ENCODE measurements at regions of chr7 and their contacts with region 1.

Region 1: DNA sequence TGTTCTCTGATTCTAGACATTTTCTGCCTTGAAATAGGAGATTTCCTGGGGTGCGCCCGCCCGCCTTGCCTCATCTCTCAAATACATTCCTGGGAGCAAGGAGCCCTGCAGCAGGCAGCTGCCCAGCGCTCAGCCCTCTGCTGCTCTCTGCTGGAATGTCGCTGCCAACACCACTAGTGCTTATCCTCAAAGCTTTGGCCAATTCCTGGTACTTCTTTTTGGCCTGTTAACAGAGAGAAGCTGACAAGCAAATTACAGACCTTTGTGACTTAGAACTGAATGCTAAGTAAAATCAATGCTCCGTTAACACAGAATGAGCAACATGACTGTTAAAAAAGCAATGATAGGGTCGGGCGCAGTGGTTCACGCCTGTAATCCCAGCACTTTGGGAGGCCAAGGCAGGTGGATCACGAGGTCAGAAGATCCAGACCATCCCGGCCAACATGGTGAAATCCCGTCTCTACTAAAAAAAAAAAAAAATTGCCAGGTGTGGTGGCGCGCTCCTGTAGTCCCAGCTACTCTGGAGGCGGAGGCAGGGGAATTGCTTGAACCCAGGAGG is 41.9 kb upstream of the SYPL1 start:
- DNase-seq: peak; percentile 89
- ATAC-seq: peak; percentile 98

Region 2: DNA sequence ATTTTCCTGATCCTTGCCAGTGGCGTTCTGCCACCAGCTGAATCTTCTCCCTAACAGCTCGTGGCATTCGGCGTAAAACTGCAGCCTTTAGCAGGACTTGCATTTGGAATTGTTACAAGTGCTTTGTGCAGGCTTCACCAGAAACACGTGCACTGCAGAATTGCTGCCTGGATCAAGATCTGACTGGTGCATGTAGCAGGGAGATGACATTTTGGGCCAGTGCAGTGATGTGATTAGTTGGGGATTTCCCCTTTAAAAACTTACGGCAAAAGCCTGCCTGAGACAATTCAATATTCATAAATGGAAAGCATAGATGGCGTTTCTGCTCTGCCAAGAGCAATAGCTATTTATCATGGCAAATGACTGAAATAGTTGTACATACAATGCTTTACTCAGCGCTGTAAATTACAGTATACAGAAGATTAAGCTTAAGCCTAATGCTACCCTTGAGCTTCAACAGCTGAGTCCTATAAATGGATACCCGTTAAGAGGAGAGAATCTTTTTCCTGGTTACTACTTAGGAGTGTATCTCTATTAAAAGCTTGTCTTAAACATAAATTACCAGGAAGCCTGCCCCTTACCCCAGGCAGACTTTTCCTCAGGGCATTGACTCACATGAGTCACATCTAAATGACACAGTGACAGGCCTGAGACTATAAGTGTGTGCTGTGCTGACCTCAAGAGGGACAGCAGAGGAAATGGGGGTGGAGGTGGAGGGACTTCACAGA is 383.9 kb before region 1 on chr7:
- intact Hi-C with region 1: no loop called
- DNase-seq: no peak
- ATAC-seq: no peak

Region 3: DNA sequence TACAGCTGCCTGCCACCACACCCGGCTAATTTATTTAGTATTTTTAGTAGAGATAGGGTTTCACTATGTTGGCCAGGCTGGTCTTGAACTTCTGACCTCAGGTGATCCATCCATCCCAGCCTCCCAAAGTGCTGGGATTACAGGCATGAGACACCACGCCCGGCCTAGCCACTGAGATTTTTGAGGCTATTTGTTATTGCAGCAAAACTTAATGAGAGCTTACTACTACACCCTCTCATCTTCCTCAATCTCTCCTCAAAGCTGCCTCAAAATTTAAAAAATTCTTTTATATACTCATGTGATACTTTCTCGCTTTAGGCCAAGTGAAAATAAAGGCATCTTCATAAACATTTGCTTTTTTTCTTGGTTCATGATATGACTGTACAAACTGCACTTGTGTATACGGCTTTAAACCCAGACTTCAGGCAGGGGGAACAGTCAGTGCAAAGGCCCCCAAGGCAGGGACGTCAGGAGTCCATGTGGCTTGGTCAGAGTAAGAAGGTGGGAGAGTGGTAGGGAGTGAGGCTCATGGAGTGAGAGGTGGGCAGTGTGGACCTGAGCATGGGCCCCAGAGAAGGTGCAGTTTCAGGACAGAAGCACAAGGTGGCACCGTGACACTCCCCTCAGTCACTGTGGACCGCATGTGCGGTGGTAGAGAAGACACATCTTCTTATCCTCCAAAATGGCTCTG is 97.3 kb before region 1 on chr7:
- intact Hi-C with region 1: loop called (anchors 2 kb)
- DNase-seq: peak; percentile 72
- ATAC-seq: peak; percentile 93

Region 4: DNA sequence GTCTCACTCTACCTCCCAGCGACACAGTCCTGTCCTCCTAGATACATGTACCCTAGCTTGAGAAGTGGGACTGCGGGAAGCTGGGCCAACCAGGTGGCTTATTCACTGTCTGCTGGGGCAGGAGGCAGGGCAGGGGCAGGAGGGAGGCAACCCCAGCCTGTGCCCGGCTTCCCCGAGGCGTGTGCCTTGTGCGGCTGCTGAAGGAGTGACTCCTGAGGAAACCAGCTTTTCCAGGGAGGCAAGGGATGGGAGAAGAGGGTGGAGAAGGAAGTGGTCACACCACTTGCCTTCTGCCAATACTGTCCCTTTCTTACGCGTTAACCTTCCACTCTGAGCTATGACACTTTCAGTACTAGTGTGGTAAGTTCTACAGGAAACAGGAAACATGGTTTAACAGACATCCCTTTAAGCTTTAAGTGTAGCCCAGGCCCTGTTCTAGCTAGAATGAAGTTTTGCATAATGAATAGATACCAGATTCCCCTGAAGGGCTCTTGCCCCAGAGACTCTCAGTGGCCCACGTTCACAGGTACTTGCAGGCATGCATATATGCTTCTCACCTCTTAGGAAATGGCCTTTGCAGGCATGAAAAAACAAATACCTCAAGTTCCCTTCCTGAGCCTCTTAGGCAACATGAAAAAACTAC is 82.5 kb before region 1 on chr7:
- intact Hi-C with region 1: no loop called
- DNase-seq: no peak
- ATAC-seq: peak; percentile 46

Region 5: DNA sequence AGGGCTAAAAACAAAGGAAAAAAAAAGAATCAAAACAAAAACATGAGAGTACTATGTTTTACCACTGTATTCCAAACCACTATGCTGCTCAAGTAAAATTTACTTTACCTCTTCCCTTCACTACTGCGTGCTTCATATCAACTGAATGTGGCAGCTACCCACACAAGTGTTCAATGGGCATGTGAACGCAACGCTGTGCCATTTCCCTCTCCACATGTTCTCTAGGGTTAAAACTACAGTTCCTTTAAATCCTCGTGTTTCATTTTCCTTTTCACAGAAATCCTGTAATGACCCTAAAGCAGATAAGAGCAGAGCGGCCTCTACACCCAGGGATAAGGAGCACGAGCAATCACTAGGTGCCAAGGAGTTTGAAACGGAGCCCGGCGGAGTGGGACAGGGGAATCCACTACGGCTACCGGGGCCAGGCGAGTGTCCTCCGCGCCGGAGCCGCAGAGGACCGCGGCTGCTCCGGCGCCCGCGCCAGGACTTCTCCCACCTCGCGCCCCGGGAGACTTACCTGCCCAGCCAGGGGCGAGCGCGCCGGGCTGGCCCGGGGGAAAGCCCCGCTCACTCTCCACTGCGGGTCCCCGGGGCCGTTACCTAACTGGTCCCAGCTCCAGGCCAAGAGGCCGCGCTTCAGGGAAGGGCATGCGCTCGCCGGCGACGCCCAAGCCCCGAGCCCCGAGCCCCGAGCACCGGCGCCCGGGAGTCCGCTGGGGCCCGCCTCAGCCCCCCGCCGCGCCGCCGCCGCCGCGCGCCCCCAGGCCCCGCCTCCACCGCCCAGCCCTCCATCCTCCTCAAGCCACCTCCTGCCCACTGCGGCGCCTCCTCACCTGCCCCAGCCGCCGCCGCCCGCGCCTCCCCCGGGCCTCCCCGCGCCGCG is 130.1 kb after region 1 on chr7:
- intact Hi-C with region 1: no loop called
- DNase-seq: peak; percentile 71
- ATAC-seq: peak; percentile 33